Activated naive CD4-positive, alpha-beta T cell treated with anti-CD3 and anti-CD28 coated beads, Interleukin-2, amount 10 ng/mL, durations not matched to agents 7 days and 5 days (primary cell): ENCODE measurements at regions of chr1 and their contacts with region 1.

Region 1: GRCh38 chr1:147242439-147243227 is at the start of gene CHD1L:
- DNase-seq: peak; percentile 95
- H3K4me3 Mint-ChIP-seq: peak within 1 kb of the TSS; percentile 92
- H3K27ac Mint-ChIP-seq: peak within 1 kb of the TSS; percentile 85
- H3K4me1 Mint-ChIP-seq: peaks cover 41% of the 10 kb centered on the region
- H3K27me3 Mint-ChIP-seq: no peaks in the 10 kb centered on the region

Region 2: GRCh38 chr1:147099192-147099591 is 143.4 kb before region 1 on chr1:
- CTCF ChIA-PET with region 1: no interaction called
- DNase-seq: no peak
- H3K4me3 Mint-ChIP-seq: no peak overlapping the region
- H3K27ac Mint-ChIP-seq: no peak overlapping the region
- H3K4me1 Mint-ChIP-seq: peaks cover 5% of the 10 kb centered on the region
- H3K27me3 Mint-ChIP-seq: peaks cover 20% of the 10 kb centered on the region

Region 3: GRCh38 chr1:147172168-147172992 is 70.3 kb before region 1 on chr1 and contains the start of gene PRKAB2:
- CTCF ChIA-PET with region 1: interaction called, 16 read pairs
- DNase-seq: peak; percentile 93
- H3K4me3 Mint-ChIP-seq: peak within 1 kb of the TSS; percentile 93
- H3K27ac Mint-ChIP-seq: peak within 1 kb of the TSS; percentile 97
- H3K4me1 Mint-ChIP-seq: peaks cover 42% of the 10 kb centered on the region
- H3K27me3 Mint-ChIP-seq: peaks cover 4% of the 10 kb centered on the region